ENCODE measurements at regions of chr11 and their contacts with region 1.

Region 1: GRCh38 chr11:84384731-84385130 is 1098.6 kb upstream of the CCDC90B start:
- DNase-seq: peak; percentile 63
- H3K4me3 ChIP-seq: no peak overlapping the region
- H3K27ac ChIP-seq: no peak overlapping the region
- H3K4me1 ChIP-seq: no peaks in the 10 kb centered on the region
- H3K27me3 ChIP-seq: no peaks in the 10 kb centered on the region

Region 2: GRCh38 chr11:84524422-84525051 is 139.8 kb after region 1 on chr11:
- in situ Hi-C with region 1: loop called (anchors 5 kb)
- DNase-seq: peak; percentile 67
- H3K4me3 ChIP-seq: no peak overlapping the region
- H3K27ac ChIP-seq: no peak overlapping the region
- H3K4me1 ChIP-seq: peaks cover 6% of the 10 kb centered on the region; the same call in 1 of the 2 replicates
- H3K27me3 ChIP-seq: no peaks in the 10 kb centered on the region